Gastrocnemius medialis (tissue), 4 donors: ENCODE measurements at regions of chr22 and their contacts with region 1.

Region 1: DNA sequence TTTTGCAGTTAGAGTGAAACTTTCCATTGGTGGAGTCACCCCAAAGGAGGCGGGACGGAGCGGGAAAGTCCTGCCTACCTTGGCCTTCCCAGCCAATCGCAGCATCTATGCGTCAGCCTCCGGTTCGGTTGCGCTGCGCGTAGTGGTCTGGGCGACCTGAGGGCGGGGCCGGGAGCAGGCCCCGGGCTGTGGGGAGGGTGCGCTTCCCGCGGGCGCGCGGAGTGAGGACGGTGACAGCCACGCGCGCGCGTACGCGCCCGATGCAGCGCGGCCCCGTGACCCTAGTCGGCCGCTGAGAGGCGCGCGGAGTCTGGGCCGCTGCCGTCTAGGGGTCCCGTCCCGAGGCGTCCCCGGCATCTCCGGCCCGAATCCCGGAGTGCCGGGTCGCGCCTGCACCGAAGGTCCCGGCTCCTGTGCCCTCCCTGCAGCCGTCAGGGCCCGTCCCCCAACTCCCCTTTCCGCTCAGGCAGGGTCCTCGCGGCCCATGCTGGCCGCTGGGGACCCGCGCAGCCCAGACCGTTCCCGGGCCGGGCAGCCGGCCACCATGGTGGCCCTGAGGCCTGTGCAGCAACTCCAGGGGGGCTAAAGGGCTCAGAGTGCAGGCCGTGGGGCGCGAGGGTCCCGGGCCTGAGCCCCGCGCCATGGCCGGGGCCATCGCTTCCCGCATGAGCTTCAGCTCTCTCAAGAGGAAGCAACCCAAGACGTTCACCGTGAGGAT is at the start of gene NF2:
- DNase-seq: peak; percentile 98 to 99
- ATAC-seq: peak; percentile 99 to 100
- H3K4me3 ChIP-seq: peak within 1 kb of the TSS; percentile 94 to 99 (median 96)
- H3K27ac ChIP-seq: peak within 1 kb of the TSS; percentile 97 to 99 (median 98)
- H3K4me1 ChIP-seq: peaks cover 11 to 16% of the 10 kb centered on the region in 2 donors
- H3K27me3 ChIP-seq: no peaks in the 10 kb centered on the region
- CTCF ChIP-seq: peak in 1 of 5 experiments; percentile 8
- POLR2A ChIP-seq: peak; percentile 60 to 71
- total RNA-seq, gene NF2: 34.7 to 66.3 (median 48.2) TPM

Region 2: GRCh38 chr22:29531419-29531818 is 72.1 kb before region 1 on chr22:
- in situ Hi-C with region 1: no loop called
- intact Hi-C with region 1: no loop called
- DNase-seq: no peak
- ATAC-seq: no peak
- H3K4me3 ChIP-seq: no peak overlapping the region
- H3K27ac ChIP-seq: no peak overlapping the region
- H3K4me1 ChIP-seq: no peaks in the 10 kb centered on the region
- H3K27me3 ChIP-seq: no peaks in the 10 kb centered on the region
- CTCF ChIP-seq: no peak
- POLR2A ChIP-seq: no peak

Region 3: DNA sequence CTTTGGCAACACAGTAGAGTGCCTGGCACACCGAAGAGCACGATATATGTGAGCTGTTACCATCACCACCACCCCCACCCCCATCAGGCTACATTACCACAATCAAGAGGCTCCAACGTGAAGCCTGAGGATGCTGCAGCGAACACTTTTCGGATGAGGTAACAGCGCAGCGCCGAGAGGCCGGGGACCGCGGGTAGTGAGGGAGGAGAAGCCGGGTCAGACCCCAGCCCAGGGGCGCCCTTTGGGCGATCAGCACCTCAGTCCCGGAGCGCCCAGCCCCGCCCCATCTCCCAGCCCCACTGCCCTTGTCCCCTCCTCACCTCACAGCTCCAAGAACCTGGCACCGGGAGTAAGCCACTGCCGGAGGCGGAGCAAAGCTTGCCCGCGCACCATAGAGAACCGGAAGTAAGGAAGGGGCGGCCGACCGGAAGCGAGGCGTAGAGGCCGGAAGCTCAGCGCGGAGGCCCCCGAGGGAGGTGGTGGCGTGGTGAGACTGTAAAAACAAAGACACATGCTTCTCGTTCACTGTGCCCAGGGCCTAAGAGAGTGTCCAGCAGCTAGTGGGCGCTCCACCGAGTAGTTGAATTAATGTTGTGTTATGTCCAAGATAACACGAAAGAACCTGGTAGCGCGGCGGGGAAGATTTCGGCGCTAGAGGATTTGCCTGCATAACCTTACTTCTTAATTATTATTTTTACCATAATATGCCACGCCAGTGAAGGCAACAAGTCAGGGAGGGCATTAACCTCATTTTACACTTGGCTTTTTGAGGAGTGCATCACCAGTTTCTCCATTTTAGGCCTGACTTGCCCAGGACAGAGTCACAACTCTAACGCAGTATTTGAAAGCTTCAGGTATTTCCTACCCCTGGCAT is 49.9 kb before region 1 on chr22 and contains the start of gene THOC5:
- in situ Hi-C with region 1: no loop called
- intact Hi-C with region 1: loop called (anchors 2 kb)
- DNase-seq: peak; percentile 91 to 94
- ATAC-seq: peak; percentile 99
- H3K4me3 ChIP-seq: peak within 1 kb of the TSS; percentile 69 to 92 (median 83)
- H3K27ac ChIP-seq: peak within 1 kb of the TSS; percentile 79 to 86 (median 81)
- H3K4me1 ChIP-seq: peaks cover 8 to 10% of the 10 kb centered on the region in 2 donors
- H3K27me3 ChIP-seq: no peaks in the 10 kb centered on the region
- CTCF ChIP-seq: peak; percentile 35 to 79 (median 54)
- POLR2A ChIP-seq: peak; percentile 16 to 38
- total RNA-seq, gene THOC5: 38.4 to 71.4 (median 56.3) TPM